Spleen (tissue), 13 donors: ENCODE measurements at regions of chr3 and their contacts with region 1.

Region 1: GRCh38 chr3:4350789-4351163 is 47.6 kb downstream of the SETMAR start:
- DNase-seq: no peak
- H3K4me3 ChIP-seq: peak overlapping the region in 7 of 8 donors; percentile 1 to 48 (median 28)
- H3K27ac ChIP-seq: peak overlapping the region; percentile 3 to 76 (median 50)
- H3K4me1 ChIP-seq: peaks cover 0 to 27% (median 10%) of the 10 kb centered on the region in 6 donors
- H3K27me3 ChIP-seq: no peaks in the 10 kb centered on the region
- CTCF ChIP-seq: peak; percentile 40 to 96 (median 73)
- POLR2A ChIP-seq: no peak

Region 2: DNA sequence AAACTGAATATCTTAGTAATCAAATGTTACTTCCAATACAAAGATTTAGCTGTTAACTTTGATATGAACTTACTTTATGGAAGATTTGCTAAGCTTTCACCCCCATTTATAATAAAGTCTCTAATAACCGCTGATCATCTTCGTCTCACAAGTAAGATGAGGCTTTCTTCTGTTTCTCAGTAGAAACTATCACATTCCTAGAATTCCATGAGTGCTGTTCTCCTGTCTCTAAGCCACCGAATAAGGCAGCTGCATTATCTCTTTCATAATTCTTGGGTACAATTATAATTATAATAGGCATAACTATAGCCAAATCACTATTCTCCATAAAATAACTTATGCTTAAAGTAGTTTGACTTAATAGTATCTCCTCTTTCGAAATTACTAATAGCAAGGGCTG is 65.9 kb before region 1 on chr3:
- intact Hi-C with region 1: no loop called
- DNase-seq: no peak
- H3K4me3 ChIP-seq: no peak overlapping the region
- H3K27ac ChIP-seq: no peak overlapping the region
- H3K4me1 ChIP-seq: no peaks in the 10 kb centered on the region
- H3K27me3 ChIP-seq: no peaks in the 10 kb centered on the region
- CTCF ChIP-seq: no peak
- POLR2A ChIP-seq: no peak

Region 3: GRCh38 chr3:4633078-4634004 is 282.6 kb after region 1 on chr3:
- intact Hi-C with region 1: loop called (anchors 5 kb)
- DNase-seq: no peak
- H3K4me3 ChIP-seq: no peak overlapping the region
- H3K27ac ChIP-seq: no peak overlapping the region
- H3K4me1 ChIP-seq: peaks cover 0 to 11% (median 3%) of the 10 kb centered on the region in 6 donors
- H3K27me3 ChIP-seq: no peaks in the 10 kb centered on the region
- CTCF ChIP-seq: peak; percentile 53 to 84 (median 78)
- POLR2A ChIP-seq: no peak